A549 (cell line): ENCODE measurements at regions of chr12 and their contacts with region 1.

Region 1: GRCh38 chr12:123614531-123614930 is 12.6 kb downstream of the DDX55 start:
- DNase-seq: no peak
- ATAC-seq: no peak
- H3K4me3 ChIP-seq: no peak overlapping the region
- H3K27ac ChIP-seq: no peak overlapping the region
- H3K4me1 ChIP-seq: peaks cover 7% of the 10 kb centered on the region; the same call in 2 of the 3 replicates
- CTCF ChIP-seq: no peak
- EP300 ChIP-seq: no peak
- POLR2A ChIP-seq: no peak
- RAD21 ChIP-seq: no peak

Region 2: GRCh38 chr12:123601602-123602489 is 12.7 kb before region 1 on chr12 and contains the start of gene DDX55:
- CTCF ChIA-PET with region 1: interaction called, 13 read pairs
- POLR2A ChIA-PET with region 1: interaction called, 3 read pairs
- DNase-seq: peak; percentile 81 to 91
- ATAC-seq: peak; percentile 97 to 98
- H3K4me3 ChIP-seq: peak within 1 kb of the TSS; percentile 71
- H3K27ac ChIP-seq: peak within 1 kb of the TSS; percentile 85 to 98
- H3K4me1 ChIP-seq: peaks cover 19% of the 10 kb centered on the region
- CTCF ChIP-seq: peak; percentile 52
- EP300 ChIP-seq: no peak
- POLR2A ChIP-seq: peak; percentile 96
- RAD21 ChIP-seq: peak; percentile 47 to 75
- polyA plus RNA-seq, gene DDX55: 54.8 and 63.4 TPM in 2 replicates

Region 3: GRCh38 chr12:123633379-123634141 is 19.0 kb after region 1 on chr12 and contains the starts of genes EIF2B1 and GTF2H3:
- CTCF ChIA-PET with region 1: interaction called, 21 read pairs
- POLR2A ChIA-PET with region 1: interaction called, 5 read pairs
- DNase-seq: peak; percentile 98 to 99
- ATAC-seq: peak; percentile 98 to 99
- H3K4me3 ChIP-seq: peak within 1 kb of the TSS; percentile 93
- H3K27ac ChIP-seq: peak within 1 kb of the TSS; percentile 93 to 94
- H3K4me1 ChIP-seq: peaks cover 6% of the 10 kb centered on the region; the same call in 1 of the 3 replicates
- CTCF ChIP-seq: no peak
- EP300 ChIP-seq: no peak
- POLR2A ChIP-seq: peak; percentile 92
- RAD21 ChIP-seq: no peak
- polyA plus RNA-seq, gene EIF2B1: 55.1 and 62.1 TPM in 2 replicates
- polyA plus RNA-seq, gene GTF2H3: 71.8 and 85.3 TPM in 2 replicates

Region 4: DNA sequence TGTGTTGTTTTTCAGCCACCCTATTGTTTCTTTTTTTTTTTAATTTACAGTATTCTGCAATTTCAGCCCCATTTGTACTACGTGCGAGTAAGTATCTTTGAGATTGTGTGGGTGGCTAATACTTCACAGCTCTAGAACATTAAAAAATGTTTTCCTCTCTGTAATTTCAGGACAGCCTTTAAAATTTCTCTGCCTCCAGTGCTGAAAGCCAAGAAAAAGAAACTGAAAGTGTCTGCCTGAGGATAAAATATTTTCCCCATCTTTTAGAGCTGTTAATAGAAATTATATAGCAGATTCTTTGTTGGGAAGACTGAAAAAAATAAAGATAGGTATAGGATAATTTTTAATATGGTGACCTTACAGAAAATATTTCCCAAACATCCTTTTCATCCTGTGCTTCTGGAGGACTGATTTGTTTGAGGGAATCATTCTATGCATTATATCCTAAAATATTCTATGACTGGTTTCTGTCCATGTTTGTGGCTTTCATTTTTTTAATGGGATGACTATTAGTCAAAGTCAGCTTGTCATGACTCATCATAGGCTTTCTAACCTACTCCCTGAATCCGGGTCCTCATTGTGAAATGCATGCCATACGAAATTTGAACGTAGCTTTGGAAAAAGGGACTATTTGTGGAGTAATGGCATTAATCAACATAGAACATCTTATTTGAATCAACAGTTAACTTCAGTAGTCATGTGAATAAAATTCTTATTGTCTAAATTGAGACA is 45.6 kb after region 1 on chr12:
- CTCF ChIA-PET with region 1: no interaction called
- POLR2A ChIA-PET with region 1: no interaction called
- DNase-seq: peak; percentile 43 to 67
- ATAC-seq: peak; percentile 74 to 86; a peak in 5 of 6 replicates
- H3K4me3 ChIP-seq: no peak overlapping the region
- H3K27ac ChIP-seq: peak overlapping the region in 1 of 2 experiments; percentile 28; a peak in 1 of 6 replicates
- H3K4me1 ChIP-seq: peaks cover 16% of the 10 kb centered on the region
- CTCF ChIP-seq: no peak
- EP300 ChIP-seq: no peak
- POLR2A ChIP-seq: no peak
- RAD21 ChIP-seq: no peak